GM13976 (cell line): ENCODE measurements at regions of chr9 and their contacts with region 1.

Region 1: DNA sequence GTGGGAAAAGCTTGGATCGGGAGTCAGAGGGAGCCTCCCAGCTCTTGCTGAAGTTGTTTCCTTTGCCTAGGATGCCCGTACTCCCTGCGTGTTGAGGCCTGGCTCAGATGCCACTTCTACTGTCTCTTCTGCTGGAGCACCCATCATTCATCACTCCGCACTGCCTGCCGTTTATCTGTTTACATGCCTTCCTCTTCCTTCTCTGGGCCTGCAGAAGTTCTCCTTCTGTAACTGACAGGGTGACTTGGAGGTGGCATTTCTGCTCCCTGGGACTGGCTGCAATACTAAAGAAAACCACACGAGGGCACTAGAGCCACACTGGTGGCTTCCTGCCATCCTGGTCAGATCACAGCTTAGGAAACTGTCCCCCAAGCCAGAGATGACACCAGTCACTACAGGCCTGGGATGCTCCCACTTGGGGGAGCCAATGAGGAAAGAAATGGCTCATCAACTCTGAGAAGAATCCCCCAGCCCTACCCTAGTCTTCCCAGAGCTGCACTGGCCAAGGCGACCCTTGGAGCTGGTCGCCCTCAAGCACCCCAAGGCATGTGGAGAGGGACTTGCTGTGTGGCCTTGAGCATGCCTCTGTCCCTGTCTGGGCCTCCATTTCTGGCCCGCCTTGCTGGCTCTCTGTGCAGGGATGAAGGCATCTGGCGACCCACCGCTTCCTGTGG is 9.7 kb upstream of the SLC25A51 start:
- DNase-seq: peak; percentile 86
- CTCF ChIP-seq: peak; percentile 93

Region 2: GRCh38 chr9:38074441-38074961 is 160.9 kb after region 1 on chr9:
- in situ Hi-C with region 1: loop called (anchors 5 kb)
- DNase-seq: no peak
- CTCF ChIP-seq: no peak

Region 3: GRCh38 chr9:38160613-38161215 is 247.1 kb after region 1 on chr9:
- in situ Hi-C with region 1: loop called (anchors 10 kb)
- DNase-seq: peak; percentile 74
- CTCF ChIP-seq: peak; percentile 84